PC-9 (cell line): ENCODE measurements at regions of chr6 and their contacts with region 1.

Region 1: DNA sequence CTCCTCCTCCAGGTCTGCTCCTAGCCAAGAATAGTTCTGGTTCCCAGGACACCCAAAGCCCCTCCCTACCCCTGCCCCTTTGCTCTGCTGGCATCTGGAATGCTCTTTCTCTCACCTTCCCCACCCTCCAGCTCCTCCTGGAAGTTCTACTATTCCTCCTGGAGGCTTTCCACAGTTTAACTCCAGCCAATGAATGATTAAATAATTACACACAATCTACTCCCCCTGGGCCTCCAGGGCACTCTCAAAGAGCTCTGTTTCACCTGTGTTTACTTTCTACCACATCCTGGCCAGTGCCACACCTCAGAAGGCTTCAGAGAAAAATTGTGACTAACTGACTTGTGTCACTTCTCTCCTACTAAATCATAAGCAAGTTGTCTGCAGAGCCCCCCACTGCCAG is 36.2 kb downstream of the GCM1 start:
- DNase-seq: peak; percentile 84 to 97
- H3K4me3 ChIP-seq: peak overlapping the region; percentile 41; the same call in 1 of the 2 replicates
- H3K27ac ChIP-seq: peak overlapping the region; percentile 88
- H3K4me1 ChIP-seq: peaks cover 61% of the 10 kb centered on the region
- H3K27me3 ChIP-seq: no peaks in the 10 kb centered on the region
- CTCF ChIP-seq: no peak

Region 2: GRCh38 chr6:53359072-53359842 is 246.9 kb after region 1 on chr6:
- CTCF ChIA-PET with region 1: no interaction called
- POLR2A ChIA-PET with region 1: interaction called, 7 read pairs
- intact Hi-C with region 1: loop called (anchors 1 kb)
- DNase-seq: peak; percentile 88 to 97
- H3K4me3 ChIP-seq: peak overlapping the region; percentile 61
- H3K27ac ChIP-seq: peak overlapping the region; percentile 84
- H3K4me1 ChIP-seq: peaks cover 36% of the 10 kb centered on the region
- H3K27me3 ChIP-seq: no peaks in the 10 kb centered on the region
- CTCF ChIP-seq: no peak

Region 3: GRCh38 chr6:53464921-53465460 is 352.6 kb after region 1 on chr6:
- CTCF ChIA-PET with region 1: no interaction called
- POLR2A ChIA-PET with region 1: no interaction called
- intact Hi-C with region 1: loop called (anchors 5 kb)
- DNase-seq: peak; percentile 76 to 88
- H3K4me3 ChIP-seq: no peak overlapping the region
- H3K27ac ChIP-seq: peak overlapping the region; percentile 76
- H3K4me1 ChIP-seq: peaks cover 36% of the 10 kb centered on the region
- H3K27me3 ChIP-seq: no peaks in the 10 kb centered on the region
- CTCF ChIP-seq: no peak

Region 4: GRCh38 chr6:53544470-53545308 is 432.3 kb after region 1 on chr6 and contains the start of gene GCLC:
- CTCF ChIA-PET with region 1: interaction called, 4 read pairs
- POLR2A ChIA-PET with region 1: no interaction called
- intact Hi-C with region 1: loop called (anchors 2 kb)
- DNase-seq: peak; percentile 85 to 95
- H3K4me3 ChIP-seq: peak within 1 kb of the TSS; percentile 79
- H3K27ac ChIP-seq: peak within 1 kb of the TSS; percentile 96
- H3K4me1 ChIP-seq: peaks cover 52% of the 10 kb centered on the region
- H3K27me3 ChIP-seq: no peaks in the 10 kb centered on the region
- CTCF ChIP-seq: peak; percentile 61; the same call in 1 of the 2 replicates
- total RNA-seq, gene GCLC: 213 and 254 TPM in 2 replicates

Region 5: DNA sequence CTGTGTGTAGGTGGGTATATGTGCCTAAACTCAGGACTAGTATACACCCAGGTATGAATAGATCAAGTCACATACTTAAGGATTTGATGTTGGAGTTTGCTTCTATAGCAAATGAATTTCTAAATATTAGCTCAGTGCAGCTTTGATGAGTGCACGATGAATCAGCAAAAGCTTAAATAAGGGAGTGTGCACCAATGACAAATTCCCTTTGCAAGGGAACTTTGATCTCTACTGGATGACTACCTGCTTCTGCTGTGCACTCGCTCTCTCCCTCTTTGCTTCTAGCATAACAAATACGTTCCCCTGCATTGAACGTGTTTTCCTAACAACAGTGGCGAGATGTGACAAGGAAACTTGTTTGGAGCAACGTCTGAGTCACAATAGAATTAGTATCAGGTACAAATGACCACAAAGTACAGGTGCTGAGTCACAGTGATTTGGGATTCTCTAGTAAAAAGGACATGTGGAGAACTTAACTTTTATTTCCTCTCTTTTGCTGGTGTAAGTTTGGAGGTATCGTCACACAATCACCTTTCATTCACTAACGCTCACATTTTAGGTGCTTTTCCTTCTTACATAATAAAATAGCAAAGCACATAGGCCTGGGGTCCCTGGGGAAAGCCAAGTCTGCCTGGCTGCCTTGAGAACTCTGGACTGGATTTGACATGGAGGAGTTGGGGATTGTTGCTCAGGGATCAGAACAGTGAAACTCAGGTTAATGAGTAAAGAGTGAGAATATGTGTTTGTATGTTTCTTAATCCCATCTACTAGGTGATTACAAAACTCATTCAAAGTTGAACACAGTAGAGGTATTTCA is 503.4 kb after region 1 on chr6:
- CTCF ChIA-PET with region 1: no interaction called
- POLR2A ChIA-PET with region 1: interaction called, 11 read pairs
- intact Hi-C with region 1: no loop called
- DNase-seq: peak; percentile 73 to 100
- H3K4me3 ChIP-seq: peak overlapping the region; percentile 49
- H3K27ac ChIP-seq: peak overlapping the region; percentile 100
- H3K4me1 ChIP-seq: peaks cover 82% of the 10 kb centered on the region
- H3K27me3 ChIP-seq: no peaks in the 10 kb centered on the region
- CTCF ChIP-seq: 0 out of 2 replicates have a peak, but pooled peaks have one; percentile 28

Region 6: DNA sequence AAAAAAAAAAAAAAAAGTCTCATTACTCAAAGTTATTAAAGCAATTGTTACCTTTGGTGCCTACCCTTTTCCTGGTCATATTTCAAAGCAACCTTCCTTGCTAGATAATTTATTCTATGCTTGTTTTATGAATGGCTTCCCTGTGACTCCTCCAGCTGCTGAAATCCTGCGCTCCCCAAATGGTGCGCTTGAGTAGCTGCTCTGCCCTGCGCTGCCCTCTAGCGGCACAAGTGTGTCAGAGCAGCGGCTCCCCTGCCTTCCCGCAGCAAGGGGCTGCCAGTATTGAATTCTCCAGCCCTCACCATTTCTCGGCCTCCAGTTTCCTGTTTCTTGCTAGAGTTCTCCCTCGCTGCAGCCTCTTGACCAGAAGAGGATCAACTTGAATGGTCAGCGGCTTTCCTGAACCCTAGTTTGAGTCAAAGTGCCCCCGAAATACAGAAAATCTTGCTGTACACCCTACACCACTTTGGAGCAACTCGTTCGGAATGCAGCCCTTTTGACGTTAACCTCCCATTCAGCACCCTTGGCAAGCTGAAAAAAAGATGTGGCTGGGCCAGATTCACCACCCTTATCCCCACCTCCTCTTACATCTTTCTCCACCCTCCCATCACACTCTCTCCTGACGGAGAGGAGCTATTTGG is 613.5 kb after region 1 on chr6:
- CTCF ChIA-PET with region 1: interaction called, 3 read pairs
- POLR2A ChIA-PET with region 1: no interaction called
- intact Hi-C with region 1: loop called (anchors 5 kb)
- DNase-seq: peak in 1 of 2 experiments; percentile 72
- H3K4me3 ChIP-seq: no peak overlapping the region
- H3K27ac ChIP-seq: no peak overlapping the region
- H3K4me1 ChIP-seq: peaks cover 55% of the 10 kb centered on the region
- H3K27me3 ChIP-seq: no peaks in the 10 kb centered on the region
- CTCF ChIP-seq: peak; percentile 92

Region 7: DNA sequence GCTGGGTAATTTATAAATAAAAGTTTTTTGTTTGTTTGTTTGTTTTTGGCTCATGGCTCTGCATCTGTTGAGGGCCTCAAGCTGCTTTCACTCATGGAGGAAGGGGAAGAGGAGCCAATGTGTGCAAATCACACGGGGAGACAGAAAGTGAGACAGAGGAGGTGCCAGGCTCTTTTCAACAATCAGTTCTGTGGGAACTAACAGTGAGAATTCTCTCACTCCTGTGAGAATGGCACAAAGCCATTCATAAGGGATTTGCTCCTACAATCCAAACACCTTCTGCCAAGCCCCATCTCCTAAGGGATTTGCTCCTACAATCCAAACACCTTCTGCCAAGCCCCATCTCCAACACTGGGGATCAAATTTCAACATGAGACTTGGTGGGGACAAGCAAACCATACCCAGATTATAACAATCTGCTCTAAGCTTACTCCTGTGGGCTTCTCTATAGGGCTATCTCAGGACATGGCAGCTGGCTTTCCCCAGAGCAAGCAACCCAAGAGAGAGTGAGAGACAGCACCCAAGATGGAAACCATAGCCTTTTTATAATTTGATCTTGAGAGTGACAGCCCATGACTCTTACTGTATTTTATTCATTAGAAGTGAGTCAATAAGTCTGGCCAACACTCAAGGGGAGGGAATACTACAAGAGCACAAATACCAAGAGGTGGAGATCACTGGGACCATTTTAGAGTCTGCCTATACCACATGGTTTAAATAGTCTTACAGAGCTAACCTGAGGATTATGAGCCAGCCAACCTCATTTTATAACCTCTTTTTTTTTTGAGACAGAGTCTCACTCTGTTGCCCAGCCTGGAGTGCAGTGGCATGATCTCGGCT is 659.6 kb after region 1 on chr6:
- CTCF ChIA-PET with region 1: no interaction called
- POLR2A ChIA-PET with region 1: no interaction called
- intact Hi-C with region 1: no loop called
- DNase-seq: no peak
- H3K4me3 ChIP-seq: no peak overlapping the region
- H3K27ac ChIP-seq: no peak overlapping the region
- H3K4me1 ChIP-seq: no peaks in the 10 kb centered on the region
- H3K27me3 ChIP-seq: no peaks in the 10 kb centered on the region
- CTCF ChIP-seq: no peak